Sciatic nerve (tissue), 2 donors: ENCODE measurements at regions of chr20 and their contacts with region 1.

Region 1: DNA sequence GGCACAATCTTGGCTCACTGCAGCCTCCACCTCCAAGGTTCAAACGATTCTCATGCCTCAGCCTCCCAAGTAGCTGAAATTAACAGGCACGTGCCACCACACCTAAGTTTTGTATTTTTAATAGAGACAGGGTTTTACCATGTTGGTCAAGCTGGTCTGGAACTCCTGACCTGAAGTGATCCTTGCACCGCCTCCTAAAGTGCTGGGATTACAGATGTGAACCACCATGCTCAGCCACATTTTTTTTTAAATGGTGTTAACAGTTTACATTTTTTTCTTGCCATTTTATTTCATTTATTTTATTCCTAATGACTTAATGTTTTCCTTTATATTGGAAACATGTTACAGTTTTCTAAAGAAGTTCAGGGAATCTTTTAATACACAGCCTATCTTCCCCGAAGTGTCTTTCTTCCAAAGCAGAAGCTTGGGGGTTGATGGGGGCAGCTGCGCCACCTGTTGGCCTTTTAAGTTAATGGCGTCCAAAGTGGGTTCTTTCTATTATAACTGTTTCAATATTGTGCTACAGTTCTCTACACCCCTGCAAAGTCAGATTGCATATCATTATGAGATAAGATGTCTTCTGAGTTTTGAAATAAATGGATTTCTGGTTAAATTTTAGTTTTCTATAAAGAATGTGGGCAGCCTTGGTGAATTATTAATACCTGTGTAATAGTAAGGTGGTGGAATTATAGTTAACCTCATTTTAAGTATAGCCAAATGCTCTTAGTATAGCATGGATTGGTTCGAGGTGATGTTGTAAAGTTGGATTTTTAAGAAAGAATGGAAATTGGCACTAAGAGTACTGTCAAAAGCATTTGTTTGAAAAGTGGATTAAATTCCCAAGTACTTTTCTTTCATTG is 42.0 kb upstream of the PLCG1 start:
- DNase-seq: peak; percentile 71
- ATAC-seq: peak; percentile 73

Region 2: GRCh38 chr20:40966103-40966502 is 129.2 kb before region 1 on chr20:
- intact Hi-C with region 1: loop called (anchors 5 kb)
- DNase-seq: no peak
- ATAC-seq: no peak

Region 3: GRCh38 chr20:40990542-40991120 is 104.7 kb before region 1 on chr20:
- intact Hi-C with region 1: loop called (anchors 5 kb)
- DNase-seq: peak; percentile 87
- ATAC-seq: peak; percentile 98

Region 4: DNA sequence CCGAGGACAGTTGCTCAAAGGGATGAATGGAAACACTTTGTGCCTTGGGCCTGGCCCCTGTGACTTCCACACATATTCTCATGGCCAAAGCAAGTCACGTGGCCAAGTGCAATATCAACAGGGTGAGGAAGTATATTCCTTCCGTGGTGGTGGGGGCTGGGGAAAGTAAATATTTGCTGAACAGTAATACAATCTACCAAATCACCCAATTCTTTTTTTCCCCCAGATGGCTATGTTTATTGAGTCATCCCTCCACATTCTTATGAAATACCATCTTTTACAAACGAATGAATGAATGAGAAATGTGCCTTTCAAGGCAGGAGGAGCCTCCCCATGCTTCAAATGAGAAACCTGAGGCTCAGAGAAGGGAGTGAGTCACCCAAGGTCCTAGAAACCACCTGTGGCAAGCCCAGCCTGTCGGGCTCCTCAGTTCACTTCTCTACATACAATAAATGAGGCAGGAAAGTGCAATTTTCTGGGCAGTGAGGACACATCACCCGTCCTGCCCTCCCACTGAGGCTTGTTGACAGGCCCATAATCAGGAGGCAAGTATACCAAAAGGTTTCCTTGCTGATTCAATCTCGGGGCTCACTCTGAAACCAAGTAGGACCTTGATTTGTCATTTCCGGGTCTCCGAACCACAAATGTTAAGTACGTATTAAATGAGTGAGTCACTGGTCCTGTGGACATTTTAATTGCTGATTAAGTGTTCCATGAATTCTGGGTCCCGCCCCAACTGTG is 92.0 kb before region 1 on chr20:
- intact Hi-C with region 1: no loop called
- DNase-seq: peak; percentile 73
- ATAC-seq: peak; percentile 84

Region 5: DNA sequence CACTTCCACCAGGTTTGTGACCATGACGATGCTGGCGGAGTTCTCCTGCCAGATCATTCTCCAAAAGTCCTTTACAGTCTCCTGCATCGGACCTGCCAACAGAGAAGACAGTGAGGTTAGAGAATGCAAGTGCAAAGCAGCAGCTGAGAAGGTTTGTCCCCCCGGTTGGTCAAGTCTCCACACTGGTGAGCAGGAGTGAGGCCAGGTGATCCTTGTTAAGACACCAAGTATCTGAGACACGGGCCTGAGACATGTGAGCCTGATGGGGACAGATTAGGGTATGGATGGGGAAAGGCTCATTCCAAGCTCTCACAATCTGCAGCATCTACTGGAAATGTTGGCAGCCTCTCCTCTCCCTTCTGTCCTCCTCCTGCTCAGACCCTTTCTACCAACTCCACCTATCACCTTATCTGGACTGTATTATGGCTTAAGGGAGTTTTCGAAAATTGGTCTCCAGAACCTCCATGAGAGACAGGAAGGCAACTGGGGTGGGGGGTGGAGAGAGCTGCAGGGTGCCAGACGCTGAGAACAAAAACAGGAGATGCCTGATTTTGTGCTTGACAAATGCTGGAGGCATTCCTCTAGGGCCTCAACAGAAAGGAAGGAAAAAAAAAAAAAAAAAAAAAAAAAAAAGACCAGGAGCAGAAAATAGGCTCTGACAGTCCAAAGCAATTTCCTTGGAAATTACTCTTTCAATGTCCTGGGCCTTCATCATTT is 1023.2 kb after region 1 on chr20:
- intact Hi-C with region 1: no loop called
- DNase-seq: no peak
- ATAC-seq: no peak